Naive thymus-derived CD4-positive, alpha-beta T cell (primary cell): ENCODE measurements at regions of chr2 and their contacts with region 1.

Region 1: GRCh38 chr2:191066197-191066918 is 52.4 kb upstream of the STAT1 start:
- DNase-seq: peak in 2 of 9 donors; percentile 20 to 26
- ATAC-seq: peak; percentile 46
- H3K4me3 ChIP-seq: no peak overlapping the region
- H3K4me3 Mint-ChIP-seq: peak overlapping the region; percentile 42 to 87 (median 67)
- H3K27ac ChIP-seq: peak overlapping the region; percentile 60
- H3K27ac Mint-ChIP-seq: peak overlapping the region; percentile 51 to 95 (median 89)
- H3K4me1 ChIP-seq: peaks cover 53 to 67% of the 10 kb centered on the region in 2 donors
- H3K4me1 Mint-ChIP-seq: peaks cover 51 to 93% (median 88%) of the 10 kb centered on the region in 7 donors
- H3K27me3 ChIP-seq: no peaks in the 10 kb centered on the region
- H3K27me3 Mint-ChIP-seq: no peaks in the 10 kb centered on the region

Region 2: DNA sequence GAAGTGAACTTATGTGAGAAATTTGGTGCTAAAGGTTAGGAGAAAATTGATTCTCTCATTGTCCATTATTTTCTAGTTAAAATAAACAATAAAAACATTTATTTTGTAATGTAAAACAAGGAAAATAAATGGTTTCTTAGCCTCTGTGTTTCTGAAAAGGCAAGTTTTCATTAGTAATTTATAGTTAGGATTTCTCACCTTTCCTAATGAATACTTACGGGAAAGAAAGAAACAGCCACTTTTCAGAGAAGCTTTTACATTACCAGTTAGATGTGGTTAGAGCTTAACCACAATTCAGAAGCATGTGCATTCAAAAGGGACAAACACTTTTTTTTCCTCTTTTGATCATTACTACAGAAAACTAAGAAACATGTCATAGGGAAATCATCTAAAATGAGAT is 550.7 kb before region 1 on chr2:
- CTCF ChIA-PET with region 1: no interaction called
- POLR2A ChIA-PET with region 1: no interaction called
- intact Hi-C with region 1: no loop called
- DNase-seq: peak in 7 of 9 donors; percentile 35 to 78 (median 68)
- ATAC-seq: peak; percentile 76
- H3K4me3 ChIP-seq: peak overlapping the region; percentile 4
- H3K4me3 Mint-ChIP-seq: peak overlapping the region in 9 of 10 donors; percentile 52 to 78 (median 72)
- H3K27ac ChIP-seq: no peak overlapping the region
- H3K27ac Mint-ChIP-seq: peak overlapping the region; percentile 65 to 92 (median 71)
- H3K4me1 ChIP-seq: peaks cover 22 to 28% of the 10 kb centered on the region in 2 donors
- H3K4me1 Mint-ChIP-seq: peaks cover 14 to 63% (median 48%) of the 10 kb centered on the region in 7 donors
- H3K27me3 ChIP-seq: no peaks in the 10 kb centered on the region
- H3K27me3 Mint-ChIP-seq: no peaks in the 10 kb centered on the region

Region 3: GRCh38 chr2:191078165-191078867 is 12.0 kb after region 1 on chr2:
- CTCF ChIA-PET with region 1: interaction called, 3 read pairs
- POLR2A ChIA-PET with region 1: interaction called, 7 read pairs
- intact Hi-C with region 1: loop called (anchors 1 kb)
- DNase-seq: no peak
- ATAC-seq: no peak
- H3K4me3 ChIP-seq: no peak overlapping the region
- H3K4me3 Mint-ChIP-seq: peak overlapping the region in 8 of 10 donors; percentile 2 to 78 (median 26)
- H3K27ac ChIP-seq: peak overlapping the region; percentile 31
- H3K27ac Mint-ChIP-seq: peak overlapping the region; percentile 33 to 91 (median 76)
- H3K4me1 ChIP-seq: peaks cover 0 to 7% of the 10 kb centered on the region in 2 donors
- H3K4me1 Mint-ChIP-seq: peaks cover 17 to 57% (median 39%) of the 10 kb centered on the region in 7 donors
- H3K27me3 ChIP-seq: no peaks in the 10 kb centered on the region
- H3K27me3 Mint-ChIP-seq: no peaks in the 10 kb centered on the region

Region 4: DNA sequence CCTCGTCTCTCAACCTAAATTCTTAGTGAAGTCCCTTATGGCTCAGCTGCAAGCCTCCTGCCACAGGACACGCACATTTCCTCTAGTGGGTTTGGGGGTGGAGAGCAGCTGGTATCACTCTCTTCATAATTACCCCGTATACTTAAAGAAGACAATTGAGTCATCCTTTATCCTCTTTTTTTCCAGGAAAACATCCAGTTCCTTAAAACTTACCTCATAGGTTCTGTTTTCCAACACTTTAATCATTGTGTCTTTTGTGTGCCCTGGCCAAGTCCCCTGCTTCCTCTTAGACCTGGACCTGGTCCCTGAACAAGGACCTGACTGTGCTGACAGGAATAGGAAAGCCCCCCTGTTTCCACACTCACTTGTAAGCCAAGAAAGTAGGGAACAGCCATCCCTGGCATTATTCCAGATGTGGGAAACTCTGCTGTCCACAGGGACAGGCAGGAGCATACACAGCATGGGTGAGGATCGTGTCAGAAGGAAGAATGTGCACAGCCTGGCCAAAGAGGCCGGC is 136.6 kb after region 1 on chr2:
- CTCF ChIA-PET with region 1: no interaction called
- POLR2A ChIA-PET with region 1: interaction called, 3 read pairs
- intact Hi-C with region 1: loop called in 1 of 2 experiments (anchors 5 kb)
- DNase-seq: no peak
- ATAC-seq: no peak
- H3K4me3 ChIP-seq: no peak overlapping the region
- H3K4me3 Mint-ChIP-seq: peak overlapping the region in 7 of 10 donors; percentile 6 to 62 (median 13)
- H3K27ac ChIP-seq: no peak overlapping the region
- H3K27ac Mint-ChIP-seq: peak overlapping the region in 5 of 9 donors; percentile 13 to 79 (median 37)
- H3K4me1 ChIP-seq: peaks cover 22 to 33% of the 10 kb centered on the region in 2 donors
- H3K4me1 Mint-ChIP-seq: peaks cover 25 to 54% (median 44%) of the 10 kb centered on the region in 7 donors
- H3K27me3 ChIP-seq: no peaks in the 10 kb centered on the region
- H3K27me3 Mint-ChIP-seq: no peaks in the 10 kb centered on the region